GM12878 (cell line): ENCODE measurements at regions of chr1 and their contacts with region 1.

Region 1: GRCh38 chr1:170593173-170594011 is 61.4 kb downstream of the GORAB start:
- DNase-seq: no peak
- ATAC-seq: peak; percentile 55; the same call in 2 of the 3 replicates
- H3K4me3 ChIP-seq: no peak overlapping the region
- H3K27ac ChIP-seq: no peak overlapping the region
- H3K4me1 ChIP-seq: no peaks in the 10 kb centered on the region
- H3K27me3 ChIP-seq: no peaks in the 10 kb centered on the region
- CTCF ChIP-seq: 0 out of 6 replicates have a peak, but pooled peaks of 1 of the 3 experiments have one; percentile 1
- EP300 ChIP-seq: no peak
- POLR2A ChIP-seq: no peak
- RAD21 ChIP-seq: no peak

Region 2: GRCh38 chr1:170604065-170604464 is 10.7 kb after region 1 on chr1:
- CTCF ChIA-PET with region 1: interaction called, 5 read pairs
- POLR2A ChIA-PET with region 1: interaction called, 3 read pairs
- RAD21 ChIA-PET with region 1: interaction called, 9 read pairs
- SMC1A ChIA-PET with region 1: interaction called, 10 read pairs
- in situ Hi-C with region 1: no loop called
- intact Hi-C with region 1: no loop called
- DNase-seq: no peak
- ATAC-seq: no peak
- H3K4me3 ChIP-seq: no peak overlapping the region
- H3K27ac ChIP-seq: no peak overlapping the region
- H3K4me1 ChIP-seq: no peaks in the 10 kb centered on the region
- H3K27me3 ChIP-seq: no peaks in the 10 kb centered on the region
- CTCF ChIP-seq: no peak
- EP300 ChIP-seq: no peak
- POLR2A ChIP-seq: no peak
- RAD21 ChIP-seq: no peak

Region 3: DNA sequence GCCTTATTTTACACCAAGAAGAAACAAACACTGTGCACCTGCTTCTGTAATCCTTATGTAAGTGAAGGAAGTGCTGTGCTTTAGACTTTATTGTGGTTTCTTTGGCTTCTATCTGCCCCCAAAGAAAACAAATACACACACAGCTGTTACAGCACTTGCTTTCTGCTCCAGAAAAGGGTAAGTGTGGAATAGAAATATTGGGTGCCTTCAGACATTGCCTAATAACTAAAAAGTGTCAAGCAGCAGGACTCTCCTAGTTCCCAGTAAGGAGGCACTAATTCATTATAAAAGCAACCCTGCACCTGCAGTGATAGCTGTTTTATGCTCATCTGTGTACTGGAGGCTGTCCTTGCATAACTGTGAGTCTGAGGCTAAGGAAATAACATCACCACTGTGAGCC is 47.2 kb after region 1 on chr1:
- CTCF ChIA-PET with region 1: no interaction called
- POLR2A ChIA-PET with region 1: interaction called, 3 read pairs
- RAD21 ChIA-PET with region 1: interaction called, 4 read pairs
- SMC1A ChIA-PET with region 1: interaction called, 21 read pairs
- in situ Hi-C with region 1: no loop called
- intact Hi-C with region 1: no loop called
- DNase-seq: no peak
- ATAC-seq: peak; percentile 49; the same call in 2 of the 3 replicates
- H3K4me3 ChIP-seq: no peak overlapping the region
- H3K27ac ChIP-seq: no peak overlapping the region
- H3K4me1 ChIP-seq: no peaks in the 10 kb centered on the region
- H3K27me3 ChIP-seq: no peaks in the 10 kb centered on the region
- CTCF ChIP-seq: no peak
- EP300 ChIP-seq: no peak
- POLR2A ChIP-seq: no peak
- RAD21 ChIP-seq: no peak

Region 4: DNA sequence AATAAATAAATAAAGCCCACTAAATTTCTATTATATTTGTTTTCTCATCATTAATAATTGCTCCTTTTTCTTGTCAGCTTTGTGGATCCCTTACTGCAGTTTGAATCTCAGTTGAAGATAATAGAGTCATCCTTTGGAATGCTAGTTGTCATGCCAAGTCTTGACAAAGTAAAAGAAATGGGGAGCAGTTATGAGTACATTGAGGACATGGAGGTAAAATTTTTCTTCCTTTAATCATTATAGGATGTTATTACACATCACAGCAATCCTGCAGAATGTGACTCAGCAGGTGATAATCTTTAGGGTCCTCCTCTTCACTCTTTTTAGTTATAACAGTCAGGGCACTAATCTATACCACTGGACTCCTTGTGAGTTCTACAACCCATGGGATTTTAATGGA is 366.0 kb after region 1 on chr1:
- CTCF ChIA-PET with region 1: no interaction called
- POLR2A ChIA-PET with region 1: no interaction called
- RAD21 ChIA-PET with region 1: no interaction called
- SMC1A ChIA-PET with region 1: no interaction called
- in situ Hi-C with region 1: no loop called
- intact Hi-C with region 1: no loop called
- DNase-seq: no peak
- ATAC-seq: no peak
- H3K4me3 ChIP-seq: no peak overlapping the region
- H3K27ac ChIP-seq: no peak overlapping the region
- H3K4me1 ChIP-seq: no peaks in the 10 kb centered on the region
- H3K27me3 ChIP-seq: no peaks in the 10 kb centered on the region
- CTCF ChIP-seq: no peak
- EP300 ChIP-seq: no peak
- POLR2A ChIP-seq: no peak
- RAD21 ChIP-seq: no peak